Mammary epithelial cell (primary cell): ENCODE measurements at regions of chr6 and their contacts with region 1.

Region 1: DNA sequence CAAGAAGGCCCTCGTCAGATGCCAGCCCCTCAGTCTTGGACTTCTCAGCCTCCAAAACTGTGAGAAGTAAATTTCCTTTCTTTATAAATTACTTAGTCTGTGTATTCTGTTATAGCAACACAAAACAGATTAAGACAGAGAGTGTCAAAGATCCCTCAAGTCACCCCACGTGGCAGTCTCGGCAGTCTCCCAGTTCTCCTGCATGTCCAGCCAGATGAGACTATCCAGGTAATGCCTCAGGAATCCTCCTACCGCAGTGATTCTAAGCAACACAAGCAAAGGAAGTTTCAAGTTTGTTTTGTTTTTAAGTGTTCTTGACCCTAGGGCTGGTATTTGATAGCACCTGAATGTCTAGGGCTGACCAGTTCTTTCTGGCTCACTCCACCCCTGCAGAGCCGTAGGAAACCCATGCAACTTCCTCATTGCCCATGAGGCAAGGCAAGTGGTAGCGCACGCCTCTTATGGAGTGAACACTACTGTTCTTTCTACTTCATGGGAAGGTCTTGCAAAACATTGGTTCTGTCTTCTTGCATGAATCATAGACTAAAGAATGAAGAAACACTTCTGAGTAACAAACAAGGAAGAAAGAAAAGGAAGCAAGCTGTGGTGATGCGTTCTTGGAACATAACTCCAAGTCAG is 24.8 kb upstream of the FOXQ1 start:
- DNase-seq: peak; percentile 99
- H3K4me3 ChIP-seq: peak overlapping the region in 1 of 3 experiments; percentile 10
- H3K27ac ChIP-seq: peak overlapping the region; percentile 90
- H3K4me1 ChIP-seq: peaks cover 30% of the 10 kb centered on the region
- H3K27me3 ChIP-seq: no peaks in the 10 kb centered on the region
- CTCF ChIP-seq: no peak

Region 2: DNA sequence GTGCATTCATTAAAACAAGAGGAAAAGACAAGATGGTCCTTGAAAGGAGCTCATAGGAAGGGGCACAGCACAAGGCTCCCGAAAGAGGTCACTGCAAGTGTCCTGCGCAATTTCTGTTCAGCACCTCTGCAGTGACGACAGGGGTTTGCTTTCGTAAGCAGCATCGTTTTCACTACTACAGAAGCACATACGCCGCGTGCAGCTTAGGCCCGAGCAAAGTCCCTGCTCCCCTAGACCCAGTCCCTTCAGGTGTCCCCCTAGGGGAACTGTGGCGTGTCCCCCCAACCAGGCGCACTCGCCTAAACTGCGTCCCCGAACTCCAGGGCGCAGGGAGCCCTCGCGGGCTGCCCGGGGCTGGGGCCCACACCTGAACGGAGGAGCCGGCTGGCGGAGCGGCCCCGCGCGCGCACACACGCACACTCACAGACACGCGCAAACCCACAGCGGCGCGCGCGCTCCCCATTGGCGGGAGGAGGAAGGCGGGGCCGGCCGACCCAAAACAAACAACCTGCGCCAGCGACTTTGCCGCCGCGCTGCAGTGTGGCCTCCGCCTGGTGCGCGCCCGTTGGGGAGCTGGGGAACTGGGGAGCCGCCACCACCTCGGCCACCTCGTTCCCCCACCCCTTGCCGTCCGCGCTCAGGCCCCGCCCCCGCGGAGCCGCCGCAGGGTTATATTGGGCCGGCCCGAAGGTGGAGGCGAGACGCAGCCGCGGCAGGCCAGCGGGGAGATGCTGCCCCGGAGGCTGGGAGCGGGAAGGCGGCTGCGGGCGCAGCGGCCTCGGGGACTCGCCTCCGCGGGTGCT is 24.5 kb after region 1 on chr6 and contains the start of gene FOXQ1:
- CTCF ChIA-PET with region 1: no interaction called
- dilution Hi-C with region 1: no loop called
- in situ Hi-C with region 1: no loop called
- intact Hi-C with region 1: loop called (anchors 1 kb)
- DNase-seq: peak; percentile 74
- H3K4me3 ChIP-seq: peak within 1 kb of the TSS; percentile 60 to 74 (median 65)
- H3K27ac ChIP-seq: peak within 1 kb of the TSS; percentile 61
- H3K4me1 ChIP-seq: peaks cover 34% of the 10 kb centered on the region
- H3K27me3 ChIP-seq: no peaks in the 10 kb centered on the region
- CTCF ChIP-seq: peak in 1 of 2 donors; percentile 6
- total RNA-seq, gene FOXQ1: 0.92 TPM in 1 of 2 donors, not detected in the other

Region 3: DNA sequence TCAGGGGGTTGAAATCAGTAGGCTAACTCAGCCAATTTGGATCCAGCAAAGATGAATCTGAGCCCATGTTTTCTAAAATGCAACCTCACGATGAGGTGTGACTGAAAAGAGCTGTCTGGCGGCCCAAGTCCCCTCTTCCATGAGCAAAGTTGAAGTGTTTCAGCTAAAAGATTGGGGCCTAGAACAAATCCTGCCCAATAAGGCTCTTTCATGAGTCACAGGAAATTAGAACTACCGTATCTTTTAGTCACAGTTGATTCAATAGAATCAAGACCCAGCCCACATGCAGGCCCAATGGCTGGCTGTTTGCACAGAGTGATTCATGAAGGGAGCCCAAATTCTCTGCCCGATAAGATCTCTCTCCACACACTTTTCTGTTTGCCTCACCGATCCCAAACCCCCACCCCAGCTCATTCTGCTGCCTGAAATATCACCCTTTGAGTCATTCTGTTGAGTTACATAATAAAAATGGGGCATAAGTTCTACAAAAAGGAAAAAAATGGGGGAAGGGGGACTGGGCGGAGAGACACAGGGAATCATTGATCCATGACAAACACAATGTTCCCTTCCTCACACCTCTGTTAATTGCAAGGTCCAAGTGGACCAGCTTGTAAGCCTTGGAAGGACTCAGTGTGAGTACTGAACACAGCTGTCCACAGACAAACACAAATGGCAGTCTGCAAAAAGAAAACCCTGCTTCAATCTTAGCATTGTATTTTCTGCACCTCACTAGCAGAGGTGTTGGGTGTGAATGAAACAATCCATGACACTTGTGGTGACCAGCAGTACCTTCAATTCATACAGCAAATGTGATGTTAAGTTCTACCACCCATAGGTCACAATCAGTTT is 38.6 kb after region 1 on chr6:
- CTCF ChIA-PET with region 1: no interaction called
- dilution Hi-C with region 1: no loop called
- in situ Hi-C with region 1: no loop called
- intact Hi-C with region 1: loop called (anchors 5 kb)
- DNase-seq: peak; percentile 96
- H3K4me3 ChIP-seq: no peak overlapping the region
- H3K27ac ChIP-seq: peak overlapping the region; percentile 83
- H3K4me1 ChIP-seq: peaks cover 56% of the 10 kb centered on the region
- H3K27me3 ChIP-seq: no peaks in the 10 kb centered on the region
- CTCF ChIP-seq: no peak

Region 4: GRCh38 chr6:1481326-1481725 is 194.2 kb after region 1 on chr6:
- CTCF ChIA-PET with region 1: no interaction called
- dilution Hi-C with region 1: no loop called
- in situ Hi-C with region 1: no loop called
- intact Hi-C with region 1: loop called (anchors 1 kb)
- DNase-seq: peak; percentile 87
- H3K4me3 ChIP-seq: no peak overlapping the region
- H3K27ac ChIP-seq: peak overlapping the region; percentile 76
- H3K4me1 ChIP-seq: peaks cover 43% of the 10 kb centered on the region
- H3K27me3 ChIP-seq: no peaks in the 10 kb centered on the region
- CTCF ChIP-seq: no peak